ENCODE measurements at regions of chr9 and their contacts with region 1.

Region 1: GRCh38 chr9:72280913-72281500 is 84.0 kb downstream of the ZFAND5 start:
- DNase-seq: peak; percentile 64
- ATAC-seq: peak; percentile 72
- H3K4me3 ChIP-seq: no peak overlapping the region
- H3K27ac ChIP-seq: no peak overlapping the region
- H3K4me1 ChIP-seq: no peaks in the 10 kb centered on the region
- H3K27me3 ChIP-seq: no peaks in the 10 kb centered on the region
- CTCF ChIP-seq: peak; percentile 86

Region 2: GRCh38 chr9:72441848-72442607 is 161.0 kb after region 1 on chr9:
- CTCF ChIA-PET with region 1: no interaction called
- POLR2A ChIA-PET with region 1: no interaction called
- intact Hi-C with region 1: no loop called
- DNase-seq: peak; percentile 84
- ATAC-seq: peak; percentile 65
- H3K4me3 ChIP-seq: no peak overlapping the region
- H3K27ac ChIP-seq: peak overlapping the region; percentile 83
- H3K4me1 ChIP-seq: peaks cover 57% of the 10 kb centered on the region
- H3K27me3 ChIP-seq: no peaks in the 10 kb centered on the region
- CTCF ChIP-seq: no peak

Region 3: DNA sequence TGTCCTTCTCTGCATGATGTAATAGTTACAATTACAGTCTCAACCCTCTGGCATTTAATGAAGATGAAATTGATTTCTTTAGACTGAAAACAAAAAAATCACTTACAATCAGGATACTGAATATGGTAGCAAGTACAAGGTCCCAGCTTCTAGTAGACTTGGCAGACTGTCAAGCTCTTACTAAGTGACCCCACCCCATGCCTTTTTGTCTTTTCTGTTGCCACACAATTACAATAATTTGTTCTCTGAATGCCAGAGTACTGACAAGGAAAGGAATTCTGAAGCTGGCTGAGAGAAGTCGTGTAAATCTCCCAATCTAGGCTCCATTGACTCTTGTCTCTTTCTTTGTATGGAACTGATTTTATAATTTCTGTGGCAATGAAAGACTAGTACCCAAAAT is 394.6 kb after region 1 on chr9:
- CTCF ChIA-PET with region 1: no interaction called
- POLR2A ChIA-PET with region 1: no interaction called
- intact Hi-C with region 1: loop called (anchors 10 kb)
- DNase-seq: no peak
- ATAC-seq: no peak
- H3K4me3 ChIP-seq: no peak overlapping the region
- H3K27ac ChIP-seq: no peak overlapping the region
- H3K4me1 ChIP-seq: no peaks in the 10 kb centered on the region
- H3K27me3 ChIP-seq: no peaks in the 10 kb centered on the region
- CTCF ChIP-seq: no peak

Region 4: GRCh38 chr9:72753266-72753893 is 472.4 kb after region 1 on chr9:
- CTCF ChIA-PET with region 1: no interaction called
- POLR2A ChIA-PET with region 1: no interaction called
- intact Hi-C with region 1: loop called (anchors 2 kb)
- DNase-seq: peak; percentile 4
- ATAC-seq: no peak
- H3K4me3 ChIP-seq: no peak overlapping the region
- H3K27ac ChIP-seq: no peak overlapping the region
- H3K4me1 ChIP-seq: no peaks in the 10 kb centered on the region
- H3K27me3 ChIP-seq: peaks cover 50% of the 10 kb centered on the region
- CTCF ChIP-seq: peak; percentile 46; the same call in 1 of the 2 replicates

Region 5: GRCh38 chr9:72826996-72827949 is 546.3 kb after region 1 on chr9:
- CTCF ChIA-PET with region 1: interaction called, 5 read pairs
- POLR2A ChIA-PET with region 1: no interaction called
- intact Hi-C with region 1: loop called (anchors 1 kb)
- DNase-seq: no peak
- ATAC-seq: no peak
- H3K4me3 ChIP-seq: no peak overlapping the region
- H3K27ac ChIP-seq: no peak overlapping the region
- H3K4me1 ChIP-seq: no peaks in the 10 kb centered on the region
- H3K27me3 ChIP-seq: 0 out of 2 replicates have a peak, but pooled peaks cover 7% of the 10 kb centered on the region
- CTCF ChIP-seq: no peak

Region 6: GRCh38 chr9:73023025-73023541 is 742.1 kb after region 1 on chr9:
- CTCF ChIA-PET with region 1: no interaction called
- POLR2A ChIA-PET with region 1: no interaction called
- intact Hi-C with region 1: loop called (anchors 1 kb)
- DNase-seq: peak; percentile 56
- ATAC-seq: peak; percentile 40
- H3K4me3 ChIP-seq: no peak overlapping the region
- H3K27ac ChIP-seq: no peak overlapping the region
- H3K4me1 ChIP-seq: no peaks in the 10 kb centered on the region
- H3K27me3 ChIP-seq: peaks cover 13% of the 10 kb centered on the region; the same call in 1 of the 2 replicates
- CTCF ChIP-seq: peak; percentile 78

Measured in PC-3 (cell line).